Left ventricle myocardium superior (tissue), 1 donor: ENCODE measurements at regions of chr3 and their contacts with region 1.

Region 1: GRCh38 chr3:78659386-78659987 is 1108.3 kb downstream of the ROBO1 start:
- DNase-seq: no peak
- ATAC-seq: no peak

Region 2: DNA sequence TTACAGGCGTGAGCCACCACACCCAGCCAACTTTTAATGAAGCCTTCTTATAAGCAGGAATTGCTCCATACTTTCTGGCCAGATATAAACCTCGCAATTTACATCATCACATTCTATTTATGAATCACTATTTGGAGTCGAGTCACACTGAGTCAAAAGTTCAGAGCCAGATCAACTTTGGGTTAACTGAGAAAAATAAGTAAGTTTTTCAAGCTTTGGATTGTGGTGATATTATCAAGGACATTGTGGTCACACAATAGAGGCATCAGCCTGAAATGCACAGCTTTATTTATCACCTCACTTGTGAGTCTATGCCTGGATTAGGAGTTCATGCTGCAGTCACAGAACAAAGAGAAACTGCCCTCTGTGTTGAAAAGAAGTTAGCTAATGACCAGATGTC is 55.1 kb before region 1 on chr3:
- intact Hi-C with region 1: no loop called
- DNase-seq: no peak
- ATAC-seq: no peak

Region 3: GRCh38 chr3:79032686-79033318 is 373.3 kb after region 1 on chr3:
- intact Hi-C with region 1: loop called (anchors 5 kb)
- DNase-seq: no peak
- ATAC-seq: no peak